Endothelial cell of umbilical vein (primary cell): ENCODE measurements at regions of chr16 and their contacts with region 1.

Region 1: DNA sequence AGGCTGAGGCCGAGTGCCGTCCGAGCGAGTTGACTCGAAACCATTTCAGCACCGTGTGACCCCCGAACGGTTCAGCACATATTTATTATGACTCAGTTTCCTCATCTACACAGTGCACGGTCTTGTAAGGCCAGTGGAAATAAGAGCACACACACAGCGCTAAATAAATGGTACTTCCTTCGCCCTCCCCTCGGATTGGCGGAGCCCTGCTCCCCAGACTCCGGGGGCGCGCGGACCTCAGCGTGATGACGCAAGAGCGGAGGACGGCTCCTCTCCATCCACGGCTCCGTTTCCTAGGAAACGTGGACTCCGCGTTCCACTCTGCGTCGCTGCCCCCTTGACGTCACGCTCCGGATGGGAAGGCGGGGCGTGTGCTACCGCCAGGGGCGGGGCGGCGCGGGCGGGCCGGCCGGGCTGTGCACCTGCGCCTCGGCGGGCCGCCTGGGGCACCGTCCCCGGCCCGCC is at the start of gene PARD6A:
- DNase-seq: peak; percentile 94
- H3K4me3 ChIP-seq: peak within 1 kb of the TSS; percentile 32 to 70 (median 64)
- H3K27ac ChIP-seq: peak within 1 kb of the TSS; percentile 44
- H3K4me1 ChIP-seq: peaks cover 9% of the 10 kb centered on the region
- H3K27me3 ChIP-seq: no peaks in the 10 kb centered on the region
- CTCF ChIP-seq: no peak
- POLR2A ChIP-seq: no peak
- total RNA-seq, gene PARD6A: 1.3 and 1.7 TPM in 2 replicates

Region 2: DNA sequence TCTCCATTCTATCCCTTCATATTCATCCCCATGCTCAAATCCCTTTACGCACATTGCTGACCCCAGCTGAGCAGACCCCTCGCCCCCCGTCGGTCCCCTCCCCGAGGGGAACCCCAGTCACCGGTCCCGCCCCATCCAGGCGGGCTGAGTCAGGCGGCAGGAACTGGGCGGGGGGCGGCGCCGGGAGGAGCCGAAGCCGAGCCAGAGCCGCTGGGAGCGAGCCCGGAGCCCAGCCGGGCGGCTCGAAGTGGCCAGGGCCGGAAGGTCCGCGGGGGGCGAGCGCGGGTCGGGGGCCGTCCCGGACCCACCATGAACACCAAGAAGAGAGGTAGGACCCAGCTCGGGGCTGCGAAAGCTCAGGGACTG is 123.3 kb before region 1 on chr16:
- CTCF ChIA-PET with region 1: interaction called, 6 read pairs
- POLR2A ChIA-PET with region 1: no interaction called
- dilution Hi-C with region 1: no loop called
- intact Hi-C with region 1: loop called (anchors 2 kb)
- DNase-seq: peak; percentile 79
- H3K4me3 ChIP-seq: peak overlapping the region; percentile 73 to 89 (median 88)
- H3K27ac ChIP-seq: peak overlapping the region; percentile 93
- H3K4me1 ChIP-seq: peaks cover 24% of the 10 kb centered on the region
- H3K27me3 ChIP-seq: no peaks in the 10 kb centered on the region
- CTCF ChIP-seq: no peak
- POLR2A ChIP-seq: peak; percentile 80

Region 3: DNA sequence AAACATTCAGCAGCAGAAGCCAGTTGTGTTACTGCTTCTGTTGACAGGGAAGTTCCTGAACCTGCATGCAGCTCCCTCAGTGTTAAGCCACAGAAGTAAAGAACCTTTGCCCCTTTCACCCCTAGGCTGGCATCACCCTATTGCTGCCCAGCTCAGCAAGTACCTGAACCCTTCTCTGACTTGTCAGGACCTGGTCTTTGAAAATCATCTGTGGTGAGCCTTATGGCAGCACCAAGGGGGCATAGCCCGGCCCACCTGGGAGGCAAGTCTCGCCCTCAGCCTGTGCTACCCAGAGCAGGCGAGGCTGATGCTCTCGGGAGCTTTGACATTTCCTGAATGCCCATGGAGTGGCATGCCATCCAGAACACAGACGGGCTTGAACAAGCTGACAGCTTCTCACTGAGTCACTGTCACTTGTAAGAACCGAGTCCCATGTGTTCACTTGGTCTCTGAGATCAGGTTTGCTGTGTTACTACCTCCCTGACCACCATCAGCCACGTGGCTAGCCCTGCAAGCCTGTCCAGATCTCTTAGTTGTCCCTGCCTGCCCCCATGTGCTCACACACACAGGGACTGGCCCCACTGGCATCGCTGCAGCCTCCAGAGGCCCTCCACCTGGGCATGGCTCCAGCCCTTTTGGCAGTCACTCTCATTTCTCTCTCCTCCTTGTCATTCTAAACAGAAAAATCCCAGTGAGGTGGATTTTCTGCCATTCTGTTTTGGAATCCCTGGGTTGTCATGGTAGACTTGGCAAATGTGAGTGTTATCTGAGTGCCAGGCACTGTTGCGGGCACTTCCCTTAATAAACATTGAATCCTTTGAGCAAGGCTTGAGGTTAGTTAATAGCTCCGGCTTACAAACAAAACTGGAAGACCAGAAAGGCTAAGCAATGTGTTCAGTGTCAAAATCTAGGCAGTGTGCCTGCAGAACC is 18.6 kb before region 1 on chr16:
- CTCF ChIA-PET with region 1: interaction called, 10 read pairs
- POLR2A ChIA-PET with region 1: no interaction called
- dilution Hi-C with region 1: no loop called
- intact Hi-C with region 1: no loop called
- DNase-seq: peak; percentile 52
- H3K4me3 ChIP-seq: no peak overlapping the region
- H3K27ac ChIP-seq: no peak overlapping the region
- H3K4me1 ChIP-seq: no peaks in the 10 kb centered on the region
- H3K27me3 ChIP-seq: no peaks in the 10 kb centered on the region
- CTCF ChIP-seq: no peak
- POLR2A ChIP-seq: no peak

Region 4: GRCh38 chr16:68179196-68179795 is 518.7 kb after region 1 on chr16:
- CTCF ChIA-PET with region 1: no interaction called
- POLR2A ChIA-PET with region 1: no interaction called
- dilution Hi-C with region 1: no loop called
- intact Hi-C with region 1: no loop called
- DNase-seq: no peak
- H3K4me3 ChIP-seq: no peak overlapping the region
- H3K27ac ChIP-seq: no peak overlapping the region
- H3K4me1 ChIP-seq: no peaks in the 10 kb centered on the region
- H3K27me3 ChIP-seq: no peaks in the 10 kb centered on the region
- CTCF ChIP-seq: no peak
- POLR2A ChIP-seq: no peak